Body of pancreas (tissue), 4 donors: ENCODE measurements at regions of chr6 and their contacts with region 1.

Region 1: DNA sequence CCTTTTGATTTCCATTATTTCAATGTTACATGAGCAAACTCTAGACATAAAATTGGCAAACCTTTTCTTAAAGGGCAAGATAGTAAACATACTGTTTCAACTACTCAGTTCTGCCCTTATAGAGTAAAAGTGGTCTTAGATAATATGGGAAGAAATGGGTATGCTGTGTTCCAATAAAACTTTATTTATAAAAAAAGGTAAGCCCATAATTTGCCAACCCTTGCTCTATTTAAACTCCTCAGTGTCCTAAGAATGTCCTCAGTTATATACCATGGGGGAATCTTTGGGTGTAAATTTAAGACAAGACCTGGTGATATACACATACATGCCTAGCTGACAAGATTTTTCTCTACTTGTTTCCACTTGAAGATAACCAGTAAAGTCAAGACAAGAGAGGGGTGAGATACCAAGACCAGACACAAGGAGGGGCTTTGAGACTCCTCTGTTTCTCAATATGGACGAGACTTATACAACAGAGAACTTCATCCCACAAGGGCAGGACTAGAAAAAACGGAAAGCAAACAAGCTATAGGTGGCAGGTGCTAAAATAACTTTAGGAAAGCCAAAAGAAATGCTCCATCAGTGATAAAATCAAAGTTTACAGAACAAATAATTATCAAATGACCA is 10.5 kb downstream of the SNX3 start:
- DNase-seq: no peak
- ATAC-seq: no peak
- H3K4me3 ChIP-seq: no peak overlapping the region
- H3K27ac ChIP-seq: no peak overlapping the region
- H3K4me1 ChIP-seq: peaks cover 56% of the 10 kb centered on the region
- H3K27me3 ChIP-seq: no peaks in the 10 kb centered on the region
- CTCF ChIP-seq: no peak
- POLR2A ChIP-seq: no peak

Region 2: DNA sequence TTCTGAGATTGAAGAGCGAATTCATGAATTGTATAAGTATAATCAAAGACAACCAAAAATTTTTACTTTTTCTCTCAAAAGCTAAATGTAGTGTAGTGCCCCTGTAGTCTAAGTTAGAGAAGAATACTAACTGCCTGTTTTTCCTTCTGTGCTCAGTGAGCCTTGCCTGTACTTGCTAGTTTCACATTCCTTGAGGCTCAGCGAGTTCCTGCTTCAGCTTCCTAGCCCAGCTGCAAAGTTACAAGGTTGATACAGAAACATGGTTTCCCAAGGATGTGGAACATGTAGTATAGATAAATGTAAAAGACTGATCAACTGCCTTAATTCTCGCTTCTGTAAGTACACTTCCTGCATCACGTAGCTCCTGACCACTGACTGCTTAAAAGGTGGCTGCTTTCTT is 259.3 kb before region 1 on chr6:
- intact Hi-C with region 1: no loop called
- DNase-seq: no peak
- ATAC-seq: no peak
- H3K4me3 ChIP-seq: no peak overlapping the region
- H3K27ac ChIP-seq: no peak overlapping the region
- H3K4me1 ChIP-seq: peaks cover 15% of the 10 kb centered on the region
- H3K27me3 ChIP-seq: no peaks in the 10 kb centered on the region
- CTCF ChIP-seq: no peak
- POLR2A ChIP-seq: no peak

Region 3: GRCh38 chr6:108127826-108128225 is 122.5 kb before region 1 on chr6:
- intact Hi-C with region 1: loop called (anchors 10 kb)
- DNase-seq: peak; percentile 61 to 84 (median 72)
- ATAC-seq: peak; percentile 99
- H3K4me3 ChIP-seq: no peak overlapping the region
- H3K27ac ChIP-seq: peak overlapping the region in 3 of 4 donors; percentile 15 to 54 (median 24)
- H3K4me1 ChIP-seq: peaks cover 17% of the 10 kb centered on the region
- H3K27me3 ChIP-seq: no peaks in the 10 kb centered on the region
- CTCF ChIP-seq: no peak
- POLR2A ChIP-seq: no peak